Naive thymus-derived CD8-positive, alpha-beta T cell (primary cell): ENCODE measurements at regions of chr4 and their contacts with region 1.

Region 1: GRCh38 chr4:6986781-6987587 is 56.2 kb upstream of the TADA2B start:
- DNase-seq: peak; percentile 86 to 97 (median 92)
- ATAC-seq: peak; percentile 88 to 90
- H3K4me3 Mint-ChIP-seq: peak overlapping the region; percentile 93 to 100 (median 97)
- H3K27ac Mint-ChIP-seq: peak overlapping the region; percentile 94 to 99 (median 97)
- H3K4me1 Mint-ChIP-seq: peaks cover 26 to 84% (median 82%) of the 10 kb centered on the region in 4 donors
- H3K27me3 Mint-ChIP-seq: no peaks in the 10 kb centered on the region

Region 2: DNA sequence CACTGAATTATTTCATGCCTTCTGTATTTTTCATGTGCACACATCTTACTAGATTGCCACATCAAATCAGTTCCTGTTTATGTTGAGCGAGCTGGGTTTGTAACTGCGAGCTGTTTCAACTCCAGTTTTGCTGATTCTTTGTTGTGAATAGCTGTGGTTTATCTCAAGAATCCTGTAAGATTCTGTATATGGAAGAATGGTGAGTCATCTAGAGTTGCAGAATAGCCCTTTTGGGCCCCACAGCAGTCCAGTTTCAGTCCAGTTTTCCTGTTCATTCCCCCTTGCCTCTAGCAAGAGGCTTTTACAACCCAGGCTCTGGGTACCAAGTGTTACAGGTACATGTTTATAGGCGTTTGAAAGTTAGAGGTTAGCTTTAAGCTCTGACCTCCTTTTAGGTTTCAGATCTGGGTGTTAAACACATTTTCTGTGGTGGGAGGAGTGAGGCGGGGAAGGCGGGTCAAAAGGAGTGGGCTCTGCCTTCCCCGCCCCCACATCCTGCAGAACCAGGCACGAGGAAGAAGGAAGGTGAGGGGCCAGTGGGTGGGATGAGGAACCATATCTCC is 44.7 kb before region 1 on chr4:
- POLR2A ChIA-PET with region 1: interaction called, 19 read pairs
- DNase-seq: peak in 9 of 10 donors; percentile 6 to 75 (median 43)
- ATAC-seq: peak; percentile 87 to 89
- H3K4me3 Mint-ChIP-seq: peak overlapping the region; percentile 71 to 90 (median 81)
- H3K27ac Mint-ChIP-seq: peak overlapping the region; percentile 84 to 97 (median 94)
- H3K4me1 Mint-ChIP-seq: peaks cover 35 to 86% (median 76%) of the 10 kb centered on the region in 4 donors
- H3K27me3 Mint-ChIP-seq: no peaks in the 10 kb centered on the region

Region 3: GRCh38 chr4:6974138-6974848 is 12.7 kb before region 1 on chr4:
- POLR2A ChIA-PET with region 1: interaction called, 10 read pairs
- DNase-seq: peak; percentile 61 to 89 (median 76)
- ATAC-seq: peak; percentile 95 to 96
- H3K4me3 Mint-ChIP-seq: peak overlapping the region in 1 of 10 donors; percentile 15
- H3K27ac Mint-ChIP-seq: peak overlapping the region in 9 of 10 donors; percentile 34 to 84 (median 67)
- H3K4me1 Mint-ChIP-seq: peaks cover 15 to 44% (median 21%) of the 10 kb centered on the region in 4 donors
- H3K27me3 Mint-ChIP-seq: no peaks in the 10 kb centered on the region

Region 4: GRCh38 chr4:7042697-7043464 is 55.9 kb after region 1 on chr4 and contains the start of gene TADA2B:
- POLR2A ChIA-PET with region 1: interaction called, 17 read pairs
- DNase-seq: peak; percentile 77 to 94 (median 88)
- ATAC-seq: peak; percentile 73 to 78
- H3K4me3 Mint-ChIP-seq: peak within 1 kb of the TSS; percentile 87 to 95 (median 92)
- H3K27ac Mint-ChIP-seq: peak within 1 kb of the TSS; percentile 72 to 94 (median 90)
- H3K4me1 Mint-ChIP-seq: peaks cover 35 to 55% (median 47%) of the 10 kb centered on the region in 4 donors
- H3K27me3 Mint-ChIP-seq: no peaks in the 10 kb centered on the region
- polyA plus RNA-seq, gene TADA2B: 2.6 to 4.8 (median 4.5) TPM

Region 5: GRCh38 chr4:7067452-7068278 is 80.7 kb after region 1 on chr4 and contains the start of gene GRPEL1:
- POLR2A ChIA-PET with region 1: interaction called, 42 read pairs
- DNase-seq: peak; percentile 37 to 100 (median 100)
- ATAC-seq: peak; percentile 91 to 92
- H3K4me3 Mint-ChIP-seq: peak within 1 kb of the TSS; percentile 85 to 98 (median 96)
- H3K27ac Mint-ChIP-seq: peak within 1 kb of the TSS; percentile 91 to 98 (median 96)
- H3K4me1 Mint-ChIP-seq: peaks cover 18 to 59% (median 52%) of the 10 kb centered on the region in 4 donors
- H3K27me3 Mint-ChIP-seq: peaks cover 0 to 3% (median 0%) of the 10 kb centered on the region in 5 donors
- polyA plus RNA-seq, gene GRPEL1: 31.4 to 47.6 (median 36.3) TPM